ENCODE measurements at regions of chr11 and their contacts with region 1.

Region 1: GRCh38 chr11:3854977-3855807 is at the start of gene STIM1:
- DNase-seq: peak; percentile 98
- ATAC-seq: peak; percentile 77
- H3K4me3 Mint-ChIP-seq: peak within 1 kb of the TSS; percentile 88
- H3K27ac Mint-ChIP-seq: peak within 1 kb of the TSS; percentile 99
- H3K4me1 Mint-ChIP-seq: peaks cover 59% of the 10 kb centered on the region
- H3K27me3 Mint-ChIP-seq: no peaks in the 10 kb centered on the region
- total RNA-seq, gene STIM1: 97.3 to 104 TPM

Region 2: GRCh38 chr11:3797329-3798095 is 57.7 kb before region 1 on chr11 and contains the start of gene NUP98:
- CTCF ChIA-PET with region 1: interaction called, 11 read pairs
- POLR2A ChIA-PET with region 1: interaction called, 4 read pairs
- DNase-seq: peak; percentile 100
- ATAC-seq: peak; percentile 98
- H3K4me3 Mint-ChIP-seq: peak within 1 kb of the TSS; percentile 91
- H3K27ac Mint-ChIP-seq: peak within 1 kb of the TSS; percentile 97
- H3K4me1 Mint-ChIP-seq: peaks cover 48% of the 10 kb centered on the region
- H3K27me3 Mint-ChIP-seq: no peaks in the 10 kb centered on the region
- total RNA-seq, gene NUP98: 106 to 108 TPM

Region 3: DNA sequence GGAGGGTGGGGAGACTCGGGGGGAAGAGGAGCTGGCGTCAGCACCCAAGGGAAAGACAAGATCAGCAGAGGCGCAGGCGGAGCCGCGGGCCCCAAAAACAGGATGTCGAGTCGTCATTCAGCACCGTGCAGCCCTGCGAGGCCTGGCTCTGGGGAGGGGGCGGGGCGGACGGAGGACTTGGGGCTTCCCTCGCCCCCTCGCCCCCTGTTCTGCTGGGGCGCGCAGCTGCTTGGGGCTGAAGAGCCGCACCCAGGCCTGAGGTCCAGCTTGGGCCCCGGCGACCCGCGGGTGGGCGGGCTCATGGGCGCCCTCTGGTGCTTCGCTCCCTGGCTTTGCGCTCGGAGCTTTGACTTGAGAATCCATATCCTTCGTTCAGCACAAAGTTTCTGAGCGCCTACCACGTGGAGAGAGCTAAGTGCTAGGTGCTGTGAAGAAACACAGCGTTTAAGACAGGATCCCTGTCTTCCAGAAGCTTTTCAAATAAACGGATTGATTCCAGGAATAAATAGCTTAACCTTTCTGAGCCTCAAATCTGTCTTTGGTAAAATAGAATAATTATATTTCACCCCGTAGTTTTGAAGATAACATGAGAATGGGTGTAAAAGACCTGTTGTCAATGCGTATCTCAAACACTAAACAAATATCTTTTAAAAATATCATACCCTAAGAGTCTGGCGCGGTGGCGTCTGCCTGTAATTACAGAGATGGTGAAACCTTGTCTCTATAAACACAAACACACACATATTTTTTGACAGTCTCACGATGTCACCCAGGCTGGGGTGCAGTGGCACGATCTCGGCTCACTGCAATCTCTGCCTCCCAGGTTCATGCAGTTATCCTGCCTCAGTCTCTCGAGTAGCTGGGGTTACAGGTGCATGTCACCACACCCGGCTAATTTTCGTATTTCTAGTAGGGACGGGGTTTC is 13.5 kb before region 1 on chr11:
- CTCF ChIA-PET with region 1: interaction called, 458 read pairs
- POLR2A ChIA-PET with region 1: interaction called, 234 read pairs
- DNase-seq: peak; percentile 94
- ATAC-seq: peak; percentile 71
- H3K4me3 Mint-ChIP-seq: peak overlapping the region; percentile 81
- H3K27ac Mint-ChIP-seq: peak overlapping the region; percentile 99
- H3K4me1 Mint-ChIP-seq: peaks cover 51% of the 10 kb centered on the region
- H3K27me3 Mint-ChIP-seq: no peaks in the 10 kb centered on the region

Region 4: DNA sequence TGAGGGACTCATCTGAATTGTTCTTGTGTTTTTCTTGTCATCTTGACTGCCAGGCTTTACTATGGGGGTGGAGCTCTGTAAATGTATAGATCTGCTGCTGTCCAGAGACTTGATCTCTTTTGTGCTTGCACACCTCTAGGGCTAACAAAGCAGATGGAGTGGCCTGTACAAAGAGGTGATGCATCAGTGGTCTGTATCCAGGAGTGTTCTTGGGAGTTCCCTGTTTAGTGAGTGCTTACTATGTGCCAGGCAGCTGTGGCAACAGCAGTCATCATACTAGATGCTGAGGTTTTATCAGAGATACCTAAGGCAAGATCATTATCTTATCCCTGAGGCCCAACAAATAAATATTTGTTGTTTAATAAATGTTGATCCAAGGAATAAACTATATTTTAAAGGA is 33.7 kb after region 1 on chr11:
- CTCF ChIA-PET with region 1: interaction called, 27 read pairs
- POLR2A ChIA-PET with region 1: no interaction called
- DNase-seq: no peak
- ATAC-seq: no peak
- H3K4me3 Mint-ChIP-seq: no peak overlapping the region
- H3K27ac Mint-ChIP-seq: no peak overlapping the region
- H3K4me1 Mint-ChIP-seq: peaks cover 48% of the 10 kb centered on the region
- H3K27me3 Mint-ChIP-seq: no peaks in the 10 kb centered on the region

Region 5: GRCh38 chr11:3929649-3930048 is 74.5 kb after region 1 on chr11:
- CTCF ChIA-PET with region 1: interaction called, 15 read pairs
- POLR2A ChIA-PET with region 1: interaction called, 3 read pairs
- DNase-seq: no peak
- ATAC-seq: no peak
- H3K4me3 Mint-ChIP-seq: no peak overlapping the region
- H3K27ac Mint-ChIP-seq: peak overlapping the region; percentile 18
- H3K4me1 Mint-ChIP-seq: peaks cover 38% of the 10 kb centered on the region
- H3K27me3 Mint-ChIP-seq: no peaks in the 10 kb centered on the region

Region 6: DNA sequence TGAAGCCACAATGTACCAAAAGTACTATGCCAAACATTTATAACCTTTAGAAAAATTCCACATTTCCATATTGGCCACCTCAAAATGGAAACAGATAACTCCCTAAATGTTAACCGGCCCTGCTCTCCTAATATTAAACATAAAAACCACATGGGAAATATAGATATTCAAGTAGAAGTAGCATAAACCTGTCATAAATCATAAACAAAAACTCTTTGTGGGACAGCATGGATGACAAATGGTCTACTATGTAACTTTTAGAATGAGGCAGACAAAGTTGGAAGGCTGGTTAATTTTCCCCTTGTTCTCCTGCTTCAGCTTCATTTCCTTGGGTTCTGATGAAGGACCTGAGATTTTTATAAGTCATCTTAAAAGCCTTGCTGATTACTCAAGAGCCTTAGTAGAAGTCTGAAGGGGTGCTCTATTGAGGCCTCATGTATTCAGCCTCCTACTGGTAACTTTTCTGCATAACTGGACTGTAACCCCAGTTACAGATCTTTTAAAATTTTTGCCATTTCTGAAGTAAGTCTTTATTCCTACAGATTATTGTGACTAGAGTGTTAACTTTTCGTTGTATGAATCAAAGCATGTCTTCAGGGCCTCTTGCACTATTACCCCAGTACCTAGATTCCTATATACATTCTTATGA is 116.7 kb after region 1 on chr11:
- CTCF ChIA-PET with region 1: interaction called, 37 read pairs
- POLR2A ChIA-PET with region 1: interaction called, 3 read pairs
- DNase-seq: no peak
- ATAC-seq: no peak
- H3K4me3 Mint-ChIP-seq: no peak overlapping the region
- H3K27ac Mint-ChIP-seq: no peak overlapping the region
- H3K4me1 Mint-ChIP-seq: peaks cover 53% of the 10 kb centered on the region
- H3K27me3 Mint-ChIP-seq: no peaks in the 10 kb centered on the region

Region 7: GRCh38 chr11:4060182-4060923 is 205.2 kb after region 1 on chr11:
- CTCF ChIA-PET with region 1: interaction called, 630 read pairs
- POLR2A ChIA-PET with region 1: interaction called, 3 read pairs
- DNase-seq: no peak
- ATAC-seq: no peak
- H3K4me3 Mint-ChIP-seq: no peak overlapping the region
- H3K27ac Mint-ChIP-seq: no peak overlapping the region
- H3K4me1 Mint-ChIP-seq: peaks cover 38% of the 10 kb centered on the region
- H3K27me3 Mint-ChIP-seq: no peaks in the 10 kb centered on the region

Region 8: GRCh38 chr11:4105916-4106315 is 250.7 kb after region 1 on chr11:
- CTCF ChIA-PET with region 1: no interaction called
- POLR2A ChIA-PET with region 1: no interaction called
- DNase-seq: no peak
- ATAC-seq: no peak
- H3K4me3 Mint-ChIP-seq: no peak overlapping the region
- H3K27ac Mint-ChIP-seq: no peak overlapping the region
- H3K4me1 Mint-ChIP-seq: peaks cover 15% of the 10 kb centered on the region
- H3K27me3 Mint-ChIP-seq: no peaks in the 10 kb centered on the region